BJ (cell line): ENCODE measurements at regions of chr17 and their contacts with region 1.

Region 1: GRCh38 chr17:31425282-31426040 is 34.0 kb downstream of the RAB11FIP4 start:
- DNase-seq: no peak
- H3K4me3 ChIP-seq: no peak overlapping the region
- H3K27me3 ChIP-seq: peaks cover 6% of the 10 kb centered on the region
- CTCF ChIP-seq: no peak

Region 2: GRCh38 chr17:31378638-31379037 is 46.8 kb before region 1 on chr17:
- CTCF ChIA-PET with region 1: no interaction called
- POLR2A ChIA-PET with region 1: no interaction called
- DNase-seq: no peak
- H3K4me3 ChIP-seq: no peak overlapping the region
- H3K27me3 ChIP-seq: no peaks in the 10 kb centered on the region
- CTCF ChIP-seq: no peak; the same call in 1 of the 2 replicates

Region 3: GRCh38 chr17:31444026-31444425 is 18.6 kb after region 1 on chr17:
- CTCF ChIA-PET with region 1: interaction called, 12 read pairs
- POLR2A ChIA-PET with region 1: interaction called, 19 read pairs
- DNase-seq: no peak
- H3K4me3 ChIP-seq: no peak overlapping the region
- H3K27me3 ChIP-seq: no peaks in the 10 kb centered on the region
- CTCF ChIP-seq: no peak

Region 4: GRCh38 chr17:31494259-31495021 is 69.0 kb after region 1 on chr17:
- CTCF ChIA-PET with region 1: no interaction called
- POLR2A ChIA-PET with region 1: no interaction called
- DNase-seq: no peak
- H3K4me3 ChIP-seq: no peak overlapping the region
- H3K27me3 ChIP-seq: peaks cover 35% of the 10 kb centered on the region
- CTCF ChIP-seq: no peak